IMR-90 (cell line): ENCODE measurements at regions of chr12 and their contacts with region 1.

Region 1: DNA sequence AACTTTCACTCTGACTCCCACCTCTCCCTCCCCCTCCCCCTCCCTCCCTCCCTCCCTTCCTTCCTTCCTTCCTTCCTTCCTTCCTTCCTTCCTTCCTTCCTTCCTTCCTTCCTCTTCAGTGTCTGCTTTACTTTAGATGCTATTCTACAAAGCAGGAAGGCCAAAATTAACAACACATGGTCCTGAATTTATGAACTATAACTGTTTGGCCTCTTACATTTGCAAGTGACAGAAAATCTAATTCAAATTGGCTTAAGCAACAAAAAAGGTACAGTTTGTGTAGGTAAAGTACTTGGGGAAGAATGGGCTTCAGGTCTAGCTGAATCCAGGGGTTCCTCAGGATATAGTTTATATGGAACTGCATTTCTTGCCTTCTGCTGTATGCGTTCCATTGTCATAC is 673.0 kb downstream of the AACS start:
- DNase-seq: no peak
- ATAC-seq: no peak
- H3K4me3 ChIP-seq: no peak overlapping the region
- H3K27ac ChIP-seq: no peak overlapping the region
- H3K4me1 ChIP-seq: no peaks in the 10 kb centered on the region
- H3K27me3 ChIP-seq: no peaks in the 10 kb centered on the region
- CTCF ChIP-seq: no peak
- POLR2A ChIP-seq: no peak
- RAD21 ChIP-seq: no peak

Region 2: GRCh38 chr12:125989696-125990095 is 251.5 kb after region 1 on chr12:
- CTCF ChIA-PET with region 1: no interaction called
- POLR2A ChIA-PET with region 1: no interaction called
- dilution Hi-C with region 1: no loop called
- in situ Hi-C with region 1: no loop called
- intact Hi-C with region 1: no loop called
- DNase-seq: no peak
- ATAC-seq: no peak
- H3K4me3 ChIP-seq: no peak overlapping the region
- H3K27ac ChIP-seq: no peak overlapping the region
- H3K4me1 ChIP-seq: no peaks in the 10 kb centered on the region
- H3K27me3 ChIP-seq: no peaks in the 10 kb centered on the region
- CTCF ChIP-seq: no peak
- POLR2A ChIP-seq: no peak
- RAD21 ChIP-seq: no peak

Region 3: DNA sequence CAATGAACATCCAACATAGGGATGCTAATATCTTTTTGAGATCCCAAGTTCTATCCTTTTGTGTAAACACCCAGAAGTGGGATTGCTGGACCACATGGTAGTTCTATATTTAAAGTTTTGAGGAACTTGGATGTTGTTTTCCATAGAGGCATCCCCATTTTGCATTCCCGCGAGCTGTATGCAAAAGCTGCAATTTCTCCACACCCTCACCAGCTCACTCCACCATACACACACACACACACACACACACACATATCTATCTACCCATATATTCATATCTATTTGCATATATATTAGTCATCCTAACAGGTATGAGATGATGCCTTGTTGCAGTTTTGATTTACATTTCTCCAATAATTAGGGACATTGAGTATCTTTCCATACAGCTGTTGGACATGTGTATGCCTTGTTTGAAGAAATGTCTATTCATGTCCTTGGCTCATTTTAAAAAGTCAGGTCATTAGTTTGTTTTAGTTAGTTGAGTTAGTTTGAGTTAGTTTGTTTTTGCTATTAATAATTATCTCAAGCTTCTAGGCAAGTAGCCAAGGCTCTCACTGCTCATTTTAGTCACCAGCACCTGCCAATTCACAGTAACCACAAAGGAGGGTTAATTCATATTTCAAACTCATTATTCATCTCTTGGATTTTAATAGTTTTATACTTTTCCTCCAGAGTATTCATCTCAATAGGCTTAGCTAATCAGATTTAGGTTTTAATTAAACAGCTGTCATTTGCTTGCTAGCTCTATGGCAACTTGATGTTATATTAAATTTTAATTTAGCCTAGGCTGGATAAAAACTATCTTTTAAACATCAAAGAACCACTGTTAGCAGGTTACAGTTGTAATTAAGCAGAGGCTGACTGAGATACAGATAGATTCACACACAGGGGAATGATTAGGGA is 1092.8 kb after region 1 on chr12:
- CTCF ChIA-PET with region 1: no interaction called
- POLR2A ChIA-PET with region 1: no interaction called
- dilution Hi-C with region 1: no loop called
- in situ Hi-C with region 1: no loop called
- intact Hi-C with region 1: no loop called
- DNase-seq: no peak
- ATAC-seq: no peak
- H3K4me3 ChIP-seq: no peak overlapping the region
- H3K27ac ChIP-seq: no peak overlapping the region
- H3K4me1 ChIP-seq: no peaks in the 10 kb centered on the region
- H3K27me3 ChIP-seq: no peaks in the 10 kb centered on the region
- CTCF ChIP-seq: no peak
- POLR2A ChIP-seq: no peak
- RAD21 ChIP-seq: no peak

Region 4: GRCh38 chr12:127363392-127363791 is 1625.2 kb after region 1 on chr12:
- CTCF ChIA-PET with region 1: no interaction called
- POLR2A ChIA-PET with region 1: no interaction called
- dilution Hi-C with region 1: no loop called
- in situ Hi-C with region 1: no loop called
- intact Hi-C with region 1: loop called (anchors 5 kb)
- DNase-seq: no peak
- ATAC-seq: no peak
- H3K4me3 ChIP-seq: no peak overlapping the region
- H3K27ac ChIP-seq: no peak overlapping the region
- H3K4me1 ChIP-seq: no peaks in the 10 kb centered on the region
- H3K27me3 ChIP-seq: no peaks in the 10 kb centered on the region
- CTCF ChIP-seq: peak; percentile 25
- POLR2A ChIP-seq: no peak
- RAD21 ChIP-seq: peak; percentile 26; the same call in 1 of the 2 replicates